ENCODE measurements at regions of chr10 and their contacts with region 1.

Region 1: GRCh38 chr10:110746254-110746826 is 102.2 kb downstream of the RBM20 start:
- DNase-seq: no peak
- H3K4me3 ChIP-seq: no peak overlapping the region
- H3K27ac ChIP-seq: no peak overlapping the region
- H3K4me1 ChIP-seq: peaks cover 0 to 27% (median 10%) of the 10 kb centered on the region in 6 donors
- H3K27me3 ChIP-seq: no peaks in the 10 kb centered on the region
- CTCF ChIP-seq: peak; percentile 45 to 91 (median 79)
- POLR2A ChIP-seq: no peak

Region 2: GRCh38 chr10:110005719-110006118 is 740.6 kb before region 1 on chr10:
- intact Hi-C with region 1: no loop called
- DNase-seq: no peak
- H3K4me3 ChIP-seq: peak overlapping the region in 3 of 8 donors; percentile 9 to 82 (median 29)
- H3K27ac ChIP-seq: peak overlapping the region in 6 of 8 donors; percentile 36 to 96 (median 94)
- H3K4me1 ChIP-seq: peaks cover 13 to 68% (median 36%) of the 10 kb centered on the region in 6 donors
- H3K27me3 ChIP-seq: no peaks in the 10 kb centered on the region
- CTCF ChIP-seq: no peak
- POLR2A ChIP-seq: no peak

Region 3: DNA sequence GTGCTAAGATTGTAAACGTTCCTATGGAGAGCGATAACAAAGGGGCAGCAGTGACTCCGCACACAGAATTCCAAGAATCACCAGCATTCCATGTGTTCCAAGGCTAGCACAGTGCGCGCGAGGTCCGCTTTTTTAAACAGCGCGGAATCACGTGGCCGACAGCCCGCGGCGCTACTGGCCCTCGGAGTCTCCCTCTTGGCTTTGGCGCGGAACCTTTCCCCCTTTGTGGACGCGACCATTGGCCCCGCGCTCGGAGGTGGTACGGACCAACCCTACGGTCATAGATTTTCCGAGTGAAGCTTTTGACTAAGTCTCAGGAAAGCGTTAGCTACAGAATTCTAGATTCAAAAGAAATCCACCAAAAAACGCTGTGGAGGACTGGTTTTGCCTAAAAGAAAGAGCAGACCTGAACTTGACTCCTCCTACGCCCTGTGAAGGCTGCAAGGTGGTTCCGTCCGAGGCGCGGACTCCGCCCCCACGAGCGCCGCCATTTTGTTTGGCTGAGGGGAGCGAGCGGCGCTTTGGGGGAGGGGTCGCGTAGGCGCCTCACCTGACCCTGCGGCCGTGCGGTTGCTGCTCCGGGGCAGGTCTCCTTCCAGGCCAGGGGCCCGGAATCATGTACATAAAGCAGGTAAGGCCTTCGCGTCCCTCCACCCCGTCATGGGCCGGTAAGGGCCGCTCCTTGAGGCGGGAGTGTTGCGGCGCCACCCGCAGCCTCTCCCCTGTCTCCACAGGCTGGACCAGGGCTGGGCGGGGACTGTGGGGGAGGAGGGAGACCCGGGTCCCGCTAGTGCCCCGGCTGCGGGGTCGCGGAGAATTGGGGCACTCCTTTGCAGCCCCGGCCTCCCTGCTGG is 178.9 kb before region 1 on chr10 and contains the start of gene SMC3:
- intact Hi-C with region 1: no loop called
- DNase-seq: peak; percentile 96
- H3K4me3 ChIP-seq: peak within 1 kb of the TSS; percentile 85 to 99 (median 96)
- H3K27ac ChIP-seq: peak within 1 kb of the TSS; percentile 87 to 97 (median 93)
- H3K4me1 ChIP-seq: peaks cover 27 to 54% (median 52%) of the 10 kb centered on the region in 6 donors
- H3K27me3 ChIP-seq: peaks cover 0 to 7% (median 0%) of the 10 kb centered on the region in 7 donors
- CTCF ChIP-seq: peak in 1 of 11 experiments; percentile 22
- POLR2A ChIP-seq: peak in 1 of 3 donors; percentile 74
- total RNA-seq, gene SMC3: 32.4 to 41.2 (median 35.0) TPM

Region 4: DNA sequence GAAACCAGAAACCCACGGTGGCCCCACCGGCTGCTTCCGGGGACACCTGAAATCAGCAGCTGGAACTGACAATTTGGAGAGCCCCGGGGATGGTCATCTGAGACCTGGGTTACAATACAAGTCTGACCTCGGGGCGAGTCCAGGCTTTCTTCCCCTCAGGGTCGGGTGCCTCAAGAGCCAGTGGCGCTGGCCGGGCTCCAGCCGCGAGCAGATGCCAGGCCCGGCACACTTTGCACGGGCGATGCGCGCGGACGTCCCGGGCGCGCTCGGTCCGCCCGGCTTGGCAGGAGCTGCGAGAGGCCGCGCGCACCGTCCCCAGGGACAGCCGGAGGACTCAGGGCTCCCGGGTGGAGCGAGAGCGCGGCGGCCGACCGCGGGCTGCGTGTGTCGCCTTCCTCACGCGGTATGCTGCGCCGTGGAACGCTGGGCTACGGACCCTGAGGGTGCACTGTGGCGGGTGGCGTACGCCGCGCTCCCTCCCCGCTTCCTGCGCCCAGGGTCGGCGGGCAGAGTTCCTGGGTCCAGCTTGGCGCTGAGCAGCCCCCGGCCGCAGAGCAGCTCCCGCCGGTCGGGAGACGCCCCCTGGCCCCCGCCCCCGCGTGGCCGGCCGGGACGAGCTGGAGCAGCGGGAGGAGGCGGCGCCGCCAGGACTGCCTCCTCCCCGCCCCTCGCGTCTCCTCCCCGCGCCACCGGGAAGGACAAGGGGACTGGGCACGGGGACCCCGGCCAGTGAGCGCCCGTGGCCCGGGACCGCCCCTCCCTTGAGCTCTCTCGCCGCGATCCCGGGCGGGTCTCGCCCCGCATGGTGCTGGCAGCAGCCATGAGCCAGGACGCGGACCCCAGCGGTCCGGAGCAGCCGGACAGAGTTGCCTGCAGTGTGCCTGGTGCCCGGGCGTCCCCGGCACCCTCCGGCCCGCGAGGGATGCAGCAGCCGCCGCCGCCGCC is 102.4 kb before region 1 on chr10 and contains the start of gene RBM20:
- intact Hi-C with region 1: no loop called
- DNase-seq: peak; percentile 77
- H3K4me3 ChIP-seq: peak within 1 kb of the TSS; percentile 36 to 77 (median 54)
- H3K27ac ChIP-seq: no peak within 1 kb of the TSS
- H3K4me1 ChIP-seq: peaks cover 10 to 34% (median 22%) of the 10 kb centered on the region in 6 donors
- H3K27me3 ChIP-seq: peaks cover 8 to 97% (median 74%) of the 10 kb centered on the region in 7 donors
- CTCF ChIP-seq: no peak
- POLR2A ChIP-seq: no peak
- total RNA-seq, gene RBM20: 0.07 to 0.72 (median 0.42) TPM in 6 of 7 donors, not detected in the other

Region 5: DNA sequence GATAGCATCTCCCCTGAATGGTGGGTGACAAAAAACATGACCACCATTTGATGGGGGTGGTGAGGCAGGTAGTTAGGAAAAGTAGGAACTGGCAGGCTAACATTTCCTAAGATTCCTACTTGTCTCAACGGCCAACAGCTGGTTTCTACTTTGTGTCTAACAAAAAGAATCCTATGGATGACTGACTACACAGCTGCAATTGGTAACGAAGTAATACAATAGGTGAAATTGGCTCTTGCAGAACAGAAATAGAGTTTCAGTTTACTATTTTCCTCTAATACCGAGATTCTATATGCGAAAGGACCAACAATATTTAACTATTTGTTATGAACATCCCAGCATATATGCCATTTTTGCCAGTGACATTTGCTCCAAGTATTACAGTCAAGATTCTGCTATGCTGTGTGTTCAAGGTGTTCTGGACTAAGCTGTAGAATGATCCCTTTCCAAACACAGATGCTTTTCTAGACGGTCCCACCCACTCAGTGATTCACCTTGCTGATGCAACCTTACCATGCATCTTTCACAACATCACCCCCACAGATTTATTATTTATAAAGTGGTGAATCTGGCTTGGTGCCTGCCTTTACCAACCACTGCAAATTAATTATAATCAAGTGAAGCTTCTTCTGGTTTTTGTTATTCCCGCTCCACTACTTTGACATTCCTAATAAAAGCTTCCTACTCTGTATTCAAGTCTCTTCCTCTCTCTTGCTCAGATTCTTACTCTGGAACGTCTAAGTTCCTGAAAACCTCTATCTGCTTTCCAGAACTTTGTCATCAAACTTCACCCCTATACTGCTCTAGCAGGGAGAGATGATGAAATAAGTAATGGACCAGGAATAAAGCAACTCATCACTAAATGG is 155.8 kb after region 1 on chr10:
- intact Hi-C with region 1: loop called (anchors 5 kb)
- DNase-seq: no peak
- H3K4me3 ChIP-seq: no peak overlapping the region
- H3K27ac ChIP-seq: no peak overlapping the region
- H3K4me1 ChIP-seq: peaks cover 0 to 18% (median under 1%) of the 10 kb centered on the region in 6 donors
- H3K27me3 ChIP-seq: no peaks in the 10 kb centered on the region
- CTCF ChIP-seq: no peak
- POLR2A ChIP-seq: no peak

Measured in spleen (tissue), 13 donors.